Astrocyte of the cerebellum (primary cell): ENCODE measurements at regions of chr3 and their contacts with region 1.

Region 1: DNA sequence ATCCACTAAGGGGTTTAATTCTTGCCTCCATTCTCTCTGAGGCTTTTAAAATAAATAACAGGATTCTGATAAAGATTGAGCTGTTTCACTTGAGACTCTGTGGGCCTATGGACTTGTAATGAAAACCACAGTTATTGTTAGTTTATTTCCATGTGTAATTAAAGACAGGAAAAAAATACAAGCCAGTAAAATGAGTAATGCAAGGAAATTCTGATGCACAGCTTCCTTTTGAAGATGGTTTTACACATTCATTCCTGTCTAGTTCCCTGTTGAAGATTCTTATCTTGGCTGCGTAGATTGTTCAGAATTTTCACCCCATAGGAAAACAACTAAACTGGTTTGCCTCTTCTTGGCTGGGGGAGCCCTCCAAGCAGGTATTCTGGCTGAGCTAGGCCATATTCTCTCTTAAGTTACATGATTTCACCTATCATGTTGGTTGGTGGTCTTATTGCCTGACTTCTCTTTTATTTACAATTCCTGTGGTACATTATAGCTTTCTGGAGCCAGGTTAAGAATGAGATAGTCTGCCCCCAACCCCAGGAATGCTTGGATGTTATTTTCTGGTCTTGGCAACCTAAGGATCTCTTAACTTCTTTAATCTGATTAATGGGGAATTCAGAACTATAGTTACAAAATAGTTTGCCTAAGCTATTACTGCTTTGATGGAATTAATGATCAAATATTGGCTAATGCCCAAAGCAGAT is 67.6 kb downstream of the MITF start:
- DNase-seq: peak; percentile 55
- H3K4me3 ChIP-seq: no peak overlapping the region
- CTCF ChIP-seq: no peak

Region 2: GRCh38 chr3:69710153-69710977 is 96.5 kb before region 1 on chr3:
- in situ Hi-C with region 1: loop called (anchors 5 kb)
- DNase-seq: no peak
- H3K4me3 ChIP-seq: no peak overlapping the region
- CTCF ChIP-seq: no peak

Region 3: GRCh38 chr3:69747511-69748258 is 59.2 kb before region 1 on chr3:
- in situ Hi-C with region 1: no loop called
- DNase-seq: no peak
- H3K4me3 ChIP-seq: no peak overlapping the region
- CTCF ChIP-seq: no peak

Region 4: GRCh38 chr3:69848113-69848512 is 41.2 kb after region 1 on chr3:
- in situ Hi-C with region 1: loop called (anchors 5 kb)
- DNase-seq: no peak
- H3K4me3 ChIP-seq: no peak overlapping the region
- CTCF ChIP-seq: no peak